K562 (cell line): ENCODE measurements at regions of chr1 and their contacts with region 1.

Region 1: DNA sequence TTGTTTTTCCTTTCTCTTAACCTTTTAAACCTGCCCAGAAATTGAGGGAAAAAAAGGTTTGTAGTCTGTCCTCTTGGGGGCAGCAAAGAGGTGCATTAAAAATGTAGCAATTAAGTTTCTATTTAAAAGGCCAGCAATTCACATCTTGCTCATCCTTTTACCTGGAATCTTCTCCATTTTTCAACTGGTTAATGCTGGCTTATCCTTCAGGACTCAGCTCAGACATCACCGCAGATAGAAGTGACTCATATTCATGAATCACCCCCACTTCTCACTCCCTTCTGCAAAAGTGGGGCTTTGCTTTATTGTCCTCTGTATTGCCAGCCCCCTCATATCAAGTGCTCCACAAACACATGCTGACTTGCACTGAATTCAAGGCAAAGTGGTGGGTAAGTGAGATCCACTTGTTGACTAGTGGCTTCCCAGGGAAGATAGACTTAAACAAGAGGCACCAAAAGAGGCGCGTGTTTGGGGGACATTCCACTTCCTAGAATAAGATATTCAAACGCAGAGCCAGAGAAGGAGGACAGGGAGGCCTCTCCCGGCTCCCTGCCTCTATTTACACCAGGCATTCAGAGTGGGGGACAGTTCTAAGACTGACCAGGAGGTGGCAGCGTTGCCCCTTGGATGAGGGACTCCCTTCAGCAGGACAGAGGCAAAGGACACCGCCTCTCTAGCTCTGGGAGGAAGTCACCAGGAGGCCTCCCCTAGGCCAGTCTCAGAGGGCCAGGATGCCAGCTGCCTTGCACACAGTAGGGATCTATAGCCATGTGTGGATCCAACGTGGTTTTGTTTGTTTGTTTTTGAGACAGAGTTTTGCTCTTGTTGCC is 23.2 kb upstream of the ZNF648 start:
- DNase-seq: peak; percentile 84 to 88 (median 88)
- ATAC-seq: peak; percentile 95
- H3K4me3 ChIP-seq: no peak overlapping the region
- H3K27ac ChIP-seq: no peak overlapping the region
- H3K4me1 ChIP-seq: peaks cover 10 to 20% of the 10 kb centered on the region in 2 experiments; a peak in 4 of 5 replicates
- H3K27me3 ChIP-seq: peaks cover 15 to 27% of the 10 kb centered on the region in 2 experiments; a peak in 4 of 5 replicates
- CTCF ChIP-seq: peak; percentile 90 to 97 (median 95)
- EP300 ChIP-seq: no peak
- POLR2A ChIP-seq: no peak
- RAD21 ChIP-seq: peak; percentile 98 to 99

Region 2: GRCh38 chr1:182015360-182015759 is 69.3 kb before region 1 on chr1:
- CTCF ChIA-PET with region 1: no interaction called
- POLR2A ChIA-PET with region 1: no interaction called
- in situ Hi-C with region 1: no loop called
- intact Hi-C with region 1: no loop called
- DNase-seq: peak in 2 of 4 experiments; percentile 17 to 27
- ATAC-seq: peak; percentile 70; the same call in 2 of the 3 replicates
- H3K4me3 ChIP-seq: no peak overlapping the region
- H3K27ac ChIP-seq: no peak overlapping the region
- H3K4me1 ChIP-seq: no peaks in the 10 kb centered on the region
- H3K27me3 ChIP-seq: no peaks in the 10 kb centered on the region
- CTCF ChIP-seq: peak; percentile 43 to 57 (median 49); a peak in 5 of 6 replicates
- EP300 ChIP-seq: no peak
- POLR2A ChIP-seq: no peak
- RAD21 ChIP-seq: peak in 1 of 2 experiments; percentile 48; a peak in 1 of 4 replicates

Region 3: GRCh38 chr1:182143154-182143657 is 58.5 kb after region 1 on chr1:
- CTCF ChIA-PET with region 1: interaction called, 3 read pairs
- POLR2A ChIA-PET with region 1: interaction called, 4 read pairs
- in situ Hi-C with region 1: no loop called
- intact Hi-C with region 1: loop called (anchors 2 kb)
- DNase-seq: peak; percentile 83 to 93 (median 88)
- ATAC-seq: peak; percentile 92
- H3K4me3 ChIP-seq: no peak overlapping the region
- H3K27ac ChIP-seq: no peak overlapping the region
- H3K4me1 ChIP-seq: peaks cover 12% of the 10 kb centered on the region in 2 experiments
- H3K27me3 ChIP-seq: peaks cover 0 to 4% of the 10 kb centered on the region in 2 experiments; a peak in 2 of 5 replicates
- CTCF ChIP-seq: peak; percentile 97 to 99 (median 98)
- EP300 ChIP-seq: peak; percentile 25; the same call in 1 of the 2 replicates
- POLR2A ChIP-seq: no peak
- RAD21 ChIP-seq: peak; percentile 96 to 100

Region 4: DNA sequence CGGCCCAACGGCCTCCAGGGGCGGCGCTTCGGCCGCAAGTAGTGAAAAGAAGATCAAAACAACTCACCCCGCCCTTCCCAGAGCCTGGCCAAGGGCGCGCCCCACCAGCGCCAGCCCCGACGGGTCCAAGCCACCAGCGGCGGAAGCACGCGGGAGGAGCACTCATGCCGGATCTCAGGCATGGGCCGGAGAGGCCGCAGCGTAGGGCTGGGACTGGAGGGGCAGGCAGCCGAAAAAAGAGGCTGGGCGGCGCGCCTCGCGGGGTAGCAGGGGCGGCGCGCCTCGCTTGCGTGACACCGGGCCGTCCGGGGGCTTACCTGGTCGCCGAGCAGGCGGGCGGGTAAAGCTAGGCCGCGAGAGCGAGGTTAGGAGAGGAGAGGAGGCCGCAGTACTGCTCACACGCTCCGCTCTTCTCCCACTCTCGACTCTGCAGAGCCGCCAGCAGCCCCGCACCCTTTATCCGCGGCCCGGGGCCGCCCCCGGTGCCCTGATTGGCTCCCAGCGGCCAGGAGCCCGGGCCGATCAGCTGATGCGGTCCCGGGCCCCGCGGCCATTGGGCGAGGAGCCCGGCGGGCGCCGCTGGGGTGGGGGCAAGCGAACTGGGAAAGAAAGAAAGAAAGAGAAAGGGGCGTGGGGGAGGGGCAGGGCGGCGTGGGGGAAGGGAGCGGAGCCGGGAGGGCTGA is 306.8 kb after region 1 on chr1 and contains the start of gene GLUL:
- CTCF ChIA-PET with region 1: interaction called, 42 read pairs
- POLR2A ChIA-PET with region 1: interaction called, 11 read pairs
- in situ Hi-C with region 1: loop called (anchors 5 kb)
- intact Hi-C with region 1: loop called (anchors 1 kb)
- DNase-seq: peak; percentile 97 to 99 (median 98)
- ATAC-seq: peak; percentile 89
- H3K4me3 ChIP-seq: peak within 1 kb of the TSS; percentile 77
- H3K27ac ChIP-seq: peak within 1 kb of the TSS; percentile 92
- H3K4me1 ChIP-seq: peaks cover 24 to 52% of the 10 kb centered on the region in 2 experiments
- H3K27me3 ChIP-seq: no peaks in the 10 kb centered on the region
- CTCF ChIP-seq: peak in 1 of 3 experiments; percentile 60; a peak in 3 of 6 replicates
- EP300 ChIP-seq: no peak
- POLR2A ChIP-seq: peak; percentile 100
- RAD21 ChIP-seq: peak; percentile 26 to 37; a peak in 3 of 4 replicates
- polyA plus RNA-seq, gene GLUL: 3,526 to 4,222 TPM

Region 5: GRCh38 chr1:182595641-182596240 is 511.0 kb after region 1 on chr1:
- CTCF ChIA-PET with region 1: interaction called, 11 read pairs
- POLR2A ChIA-PET with region 1: no interaction called
- in situ Hi-C with region 1: loop called (anchors 10 kb)
- intact Hi-C with region 1: loop called (anchors 2 kb)
- DNase-seq: peak; percentile 72 to 76 (median 73)
- ATAC-seq: peak; percentile 51; the same call in 2 of the 3 replicates
- H3K4me3 ChIP-seq: no peak overlapping the region
- H3K27ac ChIP-seq: no peak overlapping the region
- H3K4me1 ChIP-seq: 0 out of 5 replicates have a peak, but pooled peaks cover 0 to 3% of the 10 kb centered on the region in 2 experiments
- H3K27me3 ChIP-seq: peaks cover 0 to 8% of the 10 kb centered on the region in 2 experiments; a peak in 1 of 5 replicates
- CTCF ChIP-seq: peak; percentile 82 to 93 (median 90)
- EP300 ChIP-seq: peak; percentile 17; the same call in 1 of the 2 replicates
- POLR2A ChIP-seq: no peak
- RAD21 ChIP-seq: peak; percentile 81

Region 6: DNA sequence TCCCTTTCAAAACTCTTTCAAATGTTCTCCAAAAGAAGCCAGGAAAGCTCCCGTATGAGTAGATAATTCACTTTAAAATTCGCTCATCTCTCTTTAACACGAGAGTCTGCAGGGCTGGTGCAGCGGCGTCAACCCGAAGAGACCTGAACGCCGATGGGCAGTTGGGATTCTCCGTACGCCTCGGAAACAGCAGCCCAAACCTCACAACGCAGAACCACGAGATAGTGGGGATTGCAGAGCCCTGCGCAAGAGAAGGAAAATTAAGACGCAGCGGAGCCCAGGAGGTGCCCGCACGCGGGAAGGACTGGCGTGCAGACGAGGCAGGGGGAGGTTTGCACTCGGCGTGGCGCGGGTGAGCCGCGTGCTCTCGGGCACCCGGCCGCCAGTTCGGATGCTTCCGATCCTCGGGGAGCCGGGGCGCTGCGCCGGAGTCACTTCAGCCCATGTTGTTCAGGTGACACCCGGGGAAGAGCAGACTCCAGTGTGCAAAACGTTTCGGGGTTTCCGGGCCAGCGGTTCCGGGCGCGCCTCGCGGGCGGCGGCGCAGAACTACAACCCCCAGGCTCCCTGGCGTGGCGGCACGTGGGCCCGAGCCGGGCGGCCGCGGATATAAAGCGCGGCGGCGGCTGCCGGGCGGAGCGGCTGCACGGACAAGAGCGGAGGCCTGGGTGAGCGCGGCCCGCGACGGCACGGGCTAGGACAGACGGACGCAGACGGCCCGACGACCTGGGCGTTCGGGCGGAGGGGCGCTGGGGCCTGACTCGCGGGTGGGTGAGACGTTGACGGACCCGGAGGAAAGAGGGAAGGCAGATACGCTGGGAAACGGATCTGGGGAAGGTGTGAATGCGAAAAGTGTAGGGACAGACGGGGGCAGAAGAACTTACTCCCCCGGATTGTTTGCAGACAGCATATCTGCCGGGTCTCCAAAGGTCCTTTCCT is 704.7 kb after region 1 on chr1 and contains the start of gene NPL:
- CTCF ChIA-PET with region 1: interaction called, 37 read pairs
- POLR2A ChIA-PET with region 1: interaction called, 3 read pairs
- in situ Hi-C with region 1: loop called (anchors 10 kb)
- intact Hi-C with region 1: no loop called
- DNase-seq: peak; percentile 81 to 89 (median 82)
- ATAC-seq: peak; percentile 88
- H3K4me3 ChIP-seq: peak within 1 kb of the TSS; percentile 38
- H3K27ac ChIP-seq: peak within 1 kb of the TSS; percentile 61
- H3K4me1 ChIP-seq: peaks cover 23 to 41% of the 10 kb centered on the region in 2 experiments
- H3K27me3 ChIP-seq: no peaks in the 10 kb centered on the region
- CTCF ChIP-seq: no peak
- EP300 ChIP-seq: no peak
- POLR2A ChIP-seq: peak; percentile 89
- RAD21 ChIP-seq: no peak
- polyA plus RNA-seq, gene NPL: 20.8 to 22.3 TPM